Activated CD4-positive, alpha-beta T cell treated with anti-CD3 and anti-CD28 coated beads for 36 hours (primary cell): ENCODE measurements at regions of chr4 and their contacts with region 1.

Region 1: DNA sequence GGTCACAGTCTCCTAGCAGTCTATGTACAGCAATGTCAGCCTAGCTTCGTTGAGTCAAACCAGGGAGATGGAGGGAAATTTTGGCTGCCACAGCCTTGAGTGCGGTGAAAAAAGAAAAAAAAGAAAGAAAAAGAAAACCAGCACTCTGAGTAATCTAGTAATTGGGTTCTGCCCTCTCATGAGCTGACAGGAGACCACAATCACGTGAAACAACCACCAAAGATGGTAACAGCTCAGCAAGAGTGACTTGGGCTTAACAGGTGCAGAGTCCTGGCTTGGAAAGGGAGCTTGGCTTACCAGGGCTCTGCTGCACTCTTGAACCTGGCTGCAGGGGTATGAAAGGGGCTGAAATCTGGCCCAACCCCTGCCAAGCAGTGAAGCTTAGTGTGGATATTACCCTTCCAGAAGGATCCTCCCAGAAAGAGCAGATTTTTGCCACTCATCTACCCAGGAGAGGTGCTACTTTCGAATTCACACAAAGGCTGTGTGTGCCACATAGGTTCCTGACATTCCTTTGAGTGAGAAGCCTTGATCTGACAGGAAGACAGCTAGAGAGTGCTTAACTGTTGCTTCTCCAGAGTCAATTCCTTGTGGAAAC is 350.3 kb downstream of the PTTG2 start:
- DNase-seq: peak; percentile 84
- ATAC-seq: peak; percentile 87
- H3K4me3 Mint-ChIP-seq: peak overlapping the region; percentile 14
- H3K27ac Mint-ChIP-seq: peak overlapping the region; percentile 78
- H3K4me1 Mint-ChIP-seq: peaks cover 64% of the 10 kb centered on the region
- H3K27me3 Mint-ChIP-seq: peaks cover 18% of the 10 kb centered on the region

Region 2: GRCh38 chr4:37686373-37687193 is 624.0 kb before region 1 on chr4 and contains the start of gene RELL1:
- CTCF ChIA-PET with region 1: no interaction called
- POLR2A ChIA-PET with region 1: no interaction called
- intact Hi-C with region 1: loop called in 1 of 2 experiments (anchors 10 kb)
- DNase-seq: peak; percentile 99
- ATAC-seq: peak; percentile 89
- H3K4me3 Mint-ChIP-seq: peak within 1 kb of the TSS; percentile 84
- H3K27ac Mint-ChIP-seq: peak within 1 kb of the TSS; percentile 94
- H3K4me1 Mint-ChIP-seq: peaks cover 35% of the 10 kb centered on the region
- H3K27me3 Mint-ChIP-seq: no peaks in the 10 kb centered on the region
- total RNA-seq, gene RELL1: 8.5 to 9.5 TPM

Region 3: GRCh38 chr4:38069271-38069760 is 241.2 kb before region 1 on chr4:
- CTCF ChIA-PET with region 1: no interaction called
- POLR2A ChIA-PET with region 1: interaction called, 4 read pairs
- intact Hi-C with region 1: loop called in 1 of 2 experiments (anchors 5 kb)
- DNase-seq: peak; percentile 65
- ATAC-seq: peak; percentile 83
- H3K4me3 Mint-ChIP-seq: no peak overlapping the region
- H3K27ac Mint-ChIP-seq: peak overlapping the region; percentile 59
- H3K4me1 Mint-ChIP-seq: peaks cover 20% of the 10 kb centered on the region
- H3K27me3 Mint-ChIP-seq: no peaks in the 10 kb centered on the region

Region 4: DNA sequence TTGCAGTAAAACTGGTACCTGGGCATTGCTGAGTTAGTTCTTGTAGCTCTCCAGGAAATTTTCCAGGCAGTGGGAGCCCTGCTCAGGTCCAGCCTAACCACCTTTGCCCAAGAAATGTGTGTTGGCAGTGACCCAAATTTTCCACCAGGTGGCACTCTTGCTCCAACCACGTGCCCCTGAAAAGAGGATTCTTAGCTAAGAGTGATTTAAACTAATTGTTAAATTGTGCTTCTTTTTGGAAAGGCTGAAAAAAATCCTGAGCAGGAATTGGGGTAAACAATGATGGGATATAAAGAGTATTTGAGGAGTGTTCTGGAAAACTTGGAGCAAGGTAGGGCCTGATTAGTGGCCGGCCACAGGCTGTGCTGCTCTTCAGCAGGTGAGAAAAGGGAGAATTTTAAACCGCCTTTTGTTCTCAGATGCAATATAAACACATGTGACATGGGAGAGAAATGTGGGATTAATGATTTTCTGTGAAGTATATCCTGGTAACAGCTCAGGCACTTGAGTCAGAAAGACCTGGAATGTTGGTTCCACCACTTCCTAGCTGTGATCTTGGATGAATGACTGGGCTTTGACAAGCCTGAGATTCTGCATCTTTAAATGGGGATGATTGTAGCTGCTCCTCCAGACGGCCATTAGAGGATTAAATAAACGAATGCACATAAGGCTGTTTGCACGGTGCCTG is 130.7 kb before region 1 on chr4:
- CTCF ChIA-PET with region 1: interaction called, 4 read pairs
- POLR2A ChIA-PET with region 1: interaction called, 3 read pairs
- intact Hi-C with region 1: loop called (anchors 1 to 2 kb)
- DNase-seq: peak; percentile 84
- ATAC-seq: peak; percentile 55
- H3K4me3 Mint-ChIP-seq: no peak overlapping the region
- H3K27ac Mint-ChIP-seq: no peak overlapping the region
- H3K4me1 Mint-ChIP-seq: peaks cover 37% of the 10 kb centered on the region
- H3K27me3 Mint-ChIP-seq: peaks cover 2% of the 10 kb centered on the region

Region 5: GRCh38 chr4:38371391-38371851 is 60.9 kb after region 1 on chr4:
- CTCF ChIA-PET with region 1: no interaction called
- POLR2A ChIA-PET with region 1: no interaction called
- intact Hi-C with region 1: no loop called
- DNase-seq: no peak
- ATAC-seq: peak; percentile 39
- H3K4me3 Mint-ChIP-seq: no peak overlapping the region
- H3K27ac Mint-ChIP-seq: no peak overlapping the region
- H3K4me1 Mint-ChIP-seq: peaks cover 35% of the 10 kb centered on the region
- H3K27me3 Mint-ChIP-seq: no peaks in the 10 kb centered on the region

Region 6: GRCh38 chr4:38400946-38401345 is 90.4 kb after region 1 on chr4:
- CTCF ChIA-PET with region 1: no interaction called
- POLR2A ChIA-PET with region 1: no interaction called
- intact Hi-C with region 1: no loop called
- DNase-seq: no peak
- ATAC-seq: no peak
- H3K4me3 Mint-ChIP-seq: no peak overlapping the region
- H3K27ac Mint-ChIP-seq: no peak overlapping the region
- H3K4me1 Mint-ChIP-seq: no peaks in the 10 kb centered on the region
- H3K27me3 Mint-ChIP-seq: no peaks in the 10 kb centered on the region

Region 7: DNA sequence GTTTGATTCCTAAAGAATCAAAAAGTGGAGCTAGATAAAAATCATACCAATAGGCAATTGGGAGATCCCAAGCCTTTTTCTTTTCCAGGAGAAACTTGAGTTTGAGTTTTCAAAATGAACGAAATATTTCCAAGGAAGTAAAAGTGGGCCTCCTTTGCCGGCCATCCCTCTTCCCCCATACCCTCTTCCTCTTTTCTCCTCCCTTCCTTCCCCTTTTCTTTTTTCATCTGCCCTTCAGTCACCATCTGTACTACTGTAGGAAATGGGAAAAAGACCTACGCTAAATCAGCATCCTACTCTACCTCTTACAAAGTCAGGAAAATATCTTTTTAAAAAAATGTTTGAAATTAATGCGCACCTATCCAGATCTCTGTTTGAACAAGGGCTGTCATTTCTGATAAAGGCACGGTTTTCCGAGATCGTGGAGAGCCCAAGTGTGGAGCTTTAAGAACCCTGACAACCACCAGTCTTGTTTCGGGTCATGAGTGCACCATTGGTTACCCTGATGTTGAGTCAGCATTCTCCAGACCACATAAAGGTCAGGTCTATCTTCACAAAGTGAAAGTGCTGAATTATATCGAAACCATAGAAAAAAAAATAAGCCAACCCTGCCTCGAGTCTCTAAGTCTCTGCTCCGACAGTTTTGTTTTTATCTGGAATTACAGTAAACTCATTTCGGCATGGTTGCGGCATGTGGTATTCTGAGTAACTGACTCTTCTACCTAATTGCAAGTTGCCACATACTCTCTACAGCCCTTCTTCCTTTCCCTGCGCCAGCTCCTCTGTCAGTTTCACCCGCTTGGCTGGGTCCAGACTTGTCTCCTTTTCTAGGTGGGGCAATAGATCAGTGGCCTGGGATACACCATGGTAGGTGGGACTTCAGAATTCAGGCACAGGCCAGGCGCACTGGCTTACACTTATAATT is 213.2 kb after region 1 on chr4:
- CTCF ChIA-PET with region 1: no interaction called
- POLR2A ChIA-PET with region 1: no interaction called
- intact Hi-C with region 1: loop called (anchors 1 kb)
- DNase-seq: peak; percentile 76
- ATAC-seq: peak; percentile 88
- H3K4me3 Mint-ChIP-seq: peak overlapping the region; percentile 9
- H3K27ac Mint-ChIP-seq: peak overlapping the region; percentile 58
- H3K4me1 Mint-ChIP-seq: peaks cover 20% of the 10 kb centered on the region
- H3K27me3 Mint-ChIP-seq: peaks cover 4% of the 10 kb centered on the region

Region 8: GRCh38 chr4:38675146-38676121 is 364.9 kb after region 1 on chr4:
- CTCF ChIA-PET with region 1: interaction called, 12 read pairs
- POLR2A ChIA-PET with region 1: no interaction called
- intact Hi-C with region 1: loop called in 1 of 2 experiments (anchors 2 kb)
- DNase-seq: peak; percentile 91
- ATAC-seq: peak; percentile 55
- H3K4me3 Mint-ChIP-seq: peak overlapping the region; percentile 47
- H3K27ac Mint-ChIP-seq: peak overlapping the region; percentile 30
- H3K4me1 Mint-ChIP-seq: peaks cover 84% of the 10 kb centered on the region
- H3K27me3 Mint-ChIP-seq: no peaks in the 10 kb centered on the region

Region 9: GRCh38 chr4:38867478-38868058 is 557.0 kb after region 1 on chr4 and contains the start of gene FAM114A1:
- CTCF ChIA-PET with region 1: no interaction called
- POLR2A ChIA-PET with region 1: no interaction called
- intact Hi-C with region 1: no loop called
- DNase-seq: peak; percentile 31
- ATAC-seq: peak; percentile 69
- H3K4me3 Mint-ChIP-seq: peak within 1 kb of the TSS; percentile 46
- H3K27ac Mint-ChIP-seq: no peak within 1 kb of the TSS
- H3K4me1 Mint-ChIP-seq: peaks cover 8% of the 10 kb centered on the region
- H3K27me3 Mint-ChIP-seq: peaks cover 24% of the 10 kb centered on the region
- total RNA-seq, gene FAM114A1: 0.26 to 0.32 TPM

Region 10: DNA sequence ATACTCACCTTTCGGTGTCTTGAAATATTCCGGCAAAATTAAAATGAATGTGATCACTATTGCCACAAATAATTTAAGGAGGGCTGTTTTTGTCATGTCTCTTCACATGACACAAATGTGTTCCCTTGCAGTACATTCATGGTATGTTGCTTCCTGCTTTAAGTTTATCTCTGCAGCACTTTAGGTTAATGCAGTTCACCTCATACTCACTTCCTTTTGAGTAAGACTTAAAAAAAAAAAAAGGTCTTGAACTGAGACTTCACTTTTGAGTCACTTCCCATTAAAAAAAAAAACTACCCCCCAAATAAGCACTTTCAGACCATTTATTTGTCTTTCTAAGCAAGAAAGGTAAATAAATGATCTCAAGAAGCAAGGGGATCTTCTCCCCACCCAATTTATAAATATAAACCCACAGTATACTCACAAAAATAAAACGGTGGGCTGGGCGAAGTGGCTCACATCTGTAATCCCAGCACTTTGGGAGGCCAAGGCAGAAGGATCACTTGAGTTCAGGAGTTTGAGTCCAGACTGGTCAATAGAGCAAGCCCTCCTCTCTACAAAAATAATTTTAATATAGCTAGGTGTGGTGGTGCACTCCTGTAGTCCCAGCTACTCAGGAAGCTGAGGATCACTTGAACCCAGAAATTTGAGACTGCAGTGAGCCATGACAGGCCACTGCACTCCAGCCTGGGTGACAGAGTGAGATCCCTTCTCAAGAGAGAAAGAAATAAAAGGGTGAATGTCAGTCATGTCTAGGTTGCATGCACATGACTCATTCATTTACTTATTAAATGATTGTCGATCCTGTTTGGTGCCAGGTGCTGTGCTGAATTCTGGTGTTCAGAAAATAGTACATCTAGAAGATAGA is 721.9 kb after region 1 on chr4 and contains the start of gene TMEM156:
- CTCF ChIA-PET with region 1: no interaction called
- POLR2A ChIA-PET with region 1: no interaction called
- intact Hi-C with region 1: loop called in 1 of 2 experiments (anchors 5 kb)
- DNase-seq: peak; percentile 68
- ATAC-seq: peak; percentile 87
- H3K4me3 Mint-ChIP-seq: peak within 1 kb of the TSS; percentile 77
- H3K27ac Mint-ChIP-seq: peak within 1 kb of the TSS; percentile 88
- H3K4me1 Mint-ChIP-seq: peaks cover 46% of the 10 kb centered on the region
- H3K27me3 Mint-ChIP-seq: no peaks in the 10 kb centered on the region
- total RNA-seq, gene TMEM156: 14.3 to 15.4 TPM